Activated CD4-positive, alpha-beta T cell treated with anti-CD3 and anti-CD28 coated beads for 36 hours (primary cell): ENCODE measurements at regions of chr1 and their contacts with region 1.

Region 1: GRCh38 chr1:40438391-40439015 is 11.8 kb upstream of the ZFP69B start:
- DNase-seq: peak; percentile 34
- ATAC-seq: peak; percentile 58
- H3K4me3 Mint-ChIP-seq: no peak overlapping the region
- H3K27ac Mint-ChIP-seq: no peak overlapping the region
- H3K4me1 Mint-ChIP-seq: peaks cover 3% of the 10 kb centered on the region
- H3K27me3 Mint-ChIP-seq: no peaks in the 10 kb centered on the region

Region 2: DNA sequence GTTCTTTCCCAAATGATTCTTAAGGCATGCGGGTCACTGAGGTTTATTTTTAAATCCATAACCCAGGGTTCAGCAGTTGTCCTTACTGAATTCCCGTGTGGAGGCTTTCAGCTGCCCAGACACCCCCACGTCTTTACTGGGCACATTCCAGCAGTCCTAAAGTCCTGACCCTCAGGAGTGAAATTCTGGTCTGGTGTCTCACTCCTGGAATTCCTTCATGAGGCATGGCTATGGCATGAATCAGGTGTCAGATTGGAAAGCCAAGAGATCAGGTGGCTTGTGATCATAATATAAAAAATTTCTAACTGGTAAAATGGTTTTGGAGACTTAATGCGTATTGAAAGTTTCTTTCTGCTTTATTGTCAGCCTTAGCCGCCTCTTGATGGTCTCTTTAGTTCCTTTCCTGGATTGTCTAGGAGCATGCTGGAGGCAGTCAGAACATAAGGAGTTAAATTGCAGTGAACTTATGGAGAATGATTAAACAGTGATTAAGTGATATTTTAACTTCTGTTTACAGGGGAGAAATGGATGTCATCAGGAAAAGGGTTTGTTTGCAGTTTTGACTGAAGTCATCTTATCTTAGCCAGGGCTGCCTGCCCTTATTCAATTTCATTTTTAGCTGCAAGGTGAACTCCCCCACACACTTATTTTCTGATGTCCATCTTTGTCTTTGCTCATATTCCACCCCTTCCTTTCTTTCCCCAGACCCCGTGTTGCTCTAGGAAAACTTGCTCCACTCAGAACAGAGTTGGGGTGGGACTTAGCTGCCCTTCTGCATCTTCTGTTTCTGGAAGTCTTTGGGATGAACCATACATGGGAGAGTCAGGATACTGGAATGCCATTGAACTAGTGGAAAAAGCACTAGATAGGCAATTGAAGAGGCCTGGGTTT is 1259.7 kb before region 1 on chr1:
- CTCF ChIA-PET with region 1: no interaction called
- POLR2A ChIA-PET with region 1: no interaction called
- intact Hi-C with region 1: no loop called
- DNase-seq: no peak
- ATAC-seq: no peak
- H3K4me3 Mint-ChIP-seq: no peak overlapping the region
- H3K27ac Mint-ChIP-seq: no peak overlapping the region
- H3K4me1 Mint-ChIP-seq: peaks cover 11% of the 10 kb centered on the region
- H3K27me3 Mint-ChIP-seq: no peaks in the 10 kb centered on the region

Region 3: GRCh38 chr1:39960431-39960958 is 478.0 kb before region 1 on chr1:
- CTCF ChIA-PET with region 1: no interaction called
- POLR2A ChIA-PET with region 1: interaction called, 11 read pairs
- intact Hi-C with region 1: no loop called
- DNase-seq: peak; percentile 74
- ATAC-seq: peak; percentile 71
- H3K4me3 Mint-ChIP-seq: peak overlapping the region; percentile 47
- H3K27ac Mint-ChIP-seq: no peak overlapping the region
- H3K4me1 Mint-ChIP-seq: peaks cover 35% of the 10 kb centered on the region
- H3K27me3 Mint-ChIP-seq: no peaks in the 10 kb centered on the region

Region 4: DNA sequence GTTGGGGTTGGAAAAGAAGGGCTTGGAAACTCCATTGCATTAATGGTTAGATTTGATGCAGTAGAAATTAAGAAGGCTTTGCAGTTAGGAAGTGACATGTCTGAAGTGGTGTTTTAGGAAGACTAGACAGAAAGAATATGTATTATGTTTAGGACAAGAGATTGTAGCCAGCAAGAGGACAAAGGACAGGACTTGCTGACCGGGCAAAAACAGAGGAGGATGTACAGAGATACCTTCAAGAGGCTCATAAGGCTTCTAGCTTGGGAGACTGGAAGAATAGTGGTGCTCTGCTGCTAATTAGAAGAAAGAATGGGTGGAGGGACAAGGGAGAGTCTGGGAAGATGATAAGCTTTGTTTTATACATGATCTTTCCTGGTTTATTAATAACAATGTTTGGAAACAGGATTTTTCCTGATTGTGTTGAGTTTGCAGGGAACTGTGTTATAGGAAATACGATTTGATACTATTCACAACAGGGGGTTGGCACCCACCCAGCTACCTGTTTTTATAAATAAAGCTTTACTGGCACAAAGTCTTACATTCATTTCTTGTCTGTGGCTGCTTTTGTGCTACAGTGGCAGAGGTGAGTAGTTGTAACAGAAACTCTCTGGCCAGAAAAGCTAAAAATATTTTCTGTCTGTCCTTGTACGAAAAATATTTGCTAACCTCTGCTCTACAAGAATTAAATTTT is 227.8 kb before region 1 on chr1:
- CTCF ChIA-PET with region 1: no interaction called
- POLR2A ChIA-PET with region 1: no interaction called
- intact Hi-C with region 1: no loop called
- DNase-seq: no peak
- ATAC-seq: no peak
- H3K4me3 Mint-ChIP-seq: no peak overlapping the region
- H3K27ac Mint-ChIP-seq: no peak overlapping the region
- H3K4me1 Mint-ChIP-seq: peaks cover 10% of the 10 kb centered on the region
- H3K27me3 Mint-ChIP-seq: no peaks in the 10 kb centered on the region

Region 5: GRCh38 chr1:40423264-40423642 is 15.2 kb before region 1 on chr1:
- CTCF ChIA-PET with region 1: interaction called, 14 read pairs
- POLR2A ChIA-PET with region 1: no interaction called
- intact Hi-C with region 1: no loop called
- DNase-seq: no peak
- ATAC-seq: no peak
- H3K4me3 Mint-ChIP-seq: no peak overlapping the region
- H3K27ac Mint-ChIP-seq: peak overlapping the region; percentile 8
- H3K4me1 Mint-ChIP-seq: peaks cover 11% of the 10 kb centered on the region
- H3K27me3 Mint-ChIP-seq: no peaks in the 10 kb centered on the region

Region 6: DNA sequence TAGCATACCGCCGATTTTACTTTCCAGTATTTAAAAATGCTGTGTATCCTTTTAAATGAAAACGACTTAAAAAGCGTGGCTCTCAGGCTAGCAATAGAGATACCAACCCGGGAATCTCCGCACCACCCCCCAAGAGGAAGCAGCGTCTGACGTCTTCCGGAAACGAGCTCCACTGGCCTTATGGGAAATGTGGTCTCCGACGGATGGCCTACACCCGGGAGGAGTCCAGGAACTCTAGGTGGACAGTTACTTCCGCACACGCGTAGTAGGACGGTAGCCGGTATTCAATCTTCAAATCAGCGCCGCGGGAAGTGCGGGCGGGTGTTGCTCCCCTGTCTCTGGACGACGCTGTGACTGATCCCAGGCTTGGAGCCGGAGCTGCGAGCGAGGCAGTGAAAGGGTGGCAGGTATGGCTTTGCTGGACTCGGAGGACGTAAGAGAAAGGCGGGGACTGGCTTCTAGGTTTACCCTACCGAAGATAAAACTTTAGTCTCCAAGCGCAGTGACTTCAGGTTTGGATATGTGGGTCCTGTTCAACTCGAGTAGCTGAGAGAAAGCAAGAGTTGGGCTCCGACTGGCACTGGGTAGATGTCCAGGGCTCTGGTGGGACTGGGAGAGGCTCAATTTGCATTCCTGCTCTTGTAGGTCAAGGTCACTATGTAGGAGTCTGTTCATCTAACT is 93.0 kb after region 1 on chr1 and contains the start of gene ZNF684:
- CTCF ChIA-PET with region 1: interaction called, 10 read pairs
- POLR2A ChIA-PET with region 1: no interaction called
- intact Hi-C with region 1: no loop called
- DNase-seq: peak; percentile 91
- ATAC-seq: peak; percentile 98
- H3K4me3 Mint-ChIP-seq: peak within 1 kb of the TSS; percentile 88
- H3K27ac Mint-ChIP-seq: peak within 1 kb of the TSS; percentile 83
- H3K4me1 Mint-ChIP-seq: peaks cover 17% of the 10 kb centered on the region
- H3K27me3 Mint-ChIP-seq: peaks cover 6% of the 10 kb centered on the region
- total RNA-seq, gene ZNF684: 4.5 to 6.6 TPM